CD8-positive, alpha-beta memory T cell (primary cell): ENCODE measurements at regions of chr11 and their contacts with region 1.

Region 1: GRCh38 chr11:64778508-64779346 is at the start of gene SF1:
- DNase-seq: peak; percentile 98 to 100 (median 100)
- H3K4me3 ChIP-seq: peak within 1 kb of the TSS; percentile 99
- H3K4me3 Mint-ChIP-seq: peak within 1 kb of the TSS; percentile 90 to 96 (median 95)
- H3K27ac ChIP-seq: peak within 1 kb of the TSS; percentile 98
- H3K27ac Mint-ChIP-seq: peak within 1 kb of the TSS; percentile 97 to 100 (median 99)
- H3K4me1 ChIP-seq: peaks cover 52% of the 10 kb centered on the region
- H3K4me1 Mint-ChIP-seq: peaks cover 58 to 64% (median 63%) of the 10 kb centered on the region in 3 donors
- H3K27me3 ChIP-seq: no peaks in the 10 kb centered on the region
- H3K27me3 Mint-ChIP-seq: peaks cover 0 to 7% of the 10 kb centered on the region in 2 donors
- total RNA-seq, gene SF1: 403 to 423 TPM

Region 2: GRCh38 chr11:64472593-64473455 is 305.9 kb before region 1 on chr11:
- CTCF ChIA-PET with region 1: no interaction called
- POLR2A ChIA-PET with region 1: no interaction called
- DNase-seq: no peak
- H3K4me3 ChIP-seq: no peak overlapping the region
- H3K4me3 Mint-ChIP-seq: no peak overlapping the region
- H3K27ac ChIP-seq: no peak overlapping the region
- H3K27ac Mint-ChIP-seq: peak overlapping the region in 1 of 8 donors; percentile 54
- H3K4me1 ChIP-seq: peaks cover 4% of the 10 kb centered on the region
- H3K4me1 Mint-ChIP-seq: peaks cover 0 to 5% (median 0%) of the 10 kb centered on the region in 3 donors
- H3K27me3 ChIP-seq: no peaks in the 10 kb centered on the region
- H3K27me3 Mint-ChIP-seq: peaks cover 24 to 50% of the 10 kb centered on the region in 2 donors

Region 3: GRCh38 chr11:64710418-64711137 is 68.1 kb before region 1 on chr11:
- CTCF ChIA-PET with region 1: no interaction called
- POLR2A ChIA-PET with region 1: no interaction called
- DNase-seq: no peak
- H3K4me3 ChIP-seq: no peak overlapping the region
- H3K4me3 Mint-ChIP-seq: peak overlapping the region in 3 of 7 donors; percentile 26 to 57 (median 49)
- H3K27ac ChIP-seq: no peak overlapping the region
- H3K27ac Mint-ChIP-seq: peak overlapping the region in 2 of 8 donors; percentile 26 to 65
- H3K4me1 ChIP-seq: peaks cover 8% of the 10 kb centered on the region
- H3K4me1 Mint-ChIP-seq: peaks cover 5 to 24% (median 17%) of the 10 kb centered on the region in 3 donors
- H3K27me3 ChIP-seq: peaks cover 40% of the 10 kb centered on the region
- H3K27me3 Mint-ChIP-seq: peaks cover 48 to 74% of the 10 kb centered on the region in 2 donors

Region 4: DNA sequence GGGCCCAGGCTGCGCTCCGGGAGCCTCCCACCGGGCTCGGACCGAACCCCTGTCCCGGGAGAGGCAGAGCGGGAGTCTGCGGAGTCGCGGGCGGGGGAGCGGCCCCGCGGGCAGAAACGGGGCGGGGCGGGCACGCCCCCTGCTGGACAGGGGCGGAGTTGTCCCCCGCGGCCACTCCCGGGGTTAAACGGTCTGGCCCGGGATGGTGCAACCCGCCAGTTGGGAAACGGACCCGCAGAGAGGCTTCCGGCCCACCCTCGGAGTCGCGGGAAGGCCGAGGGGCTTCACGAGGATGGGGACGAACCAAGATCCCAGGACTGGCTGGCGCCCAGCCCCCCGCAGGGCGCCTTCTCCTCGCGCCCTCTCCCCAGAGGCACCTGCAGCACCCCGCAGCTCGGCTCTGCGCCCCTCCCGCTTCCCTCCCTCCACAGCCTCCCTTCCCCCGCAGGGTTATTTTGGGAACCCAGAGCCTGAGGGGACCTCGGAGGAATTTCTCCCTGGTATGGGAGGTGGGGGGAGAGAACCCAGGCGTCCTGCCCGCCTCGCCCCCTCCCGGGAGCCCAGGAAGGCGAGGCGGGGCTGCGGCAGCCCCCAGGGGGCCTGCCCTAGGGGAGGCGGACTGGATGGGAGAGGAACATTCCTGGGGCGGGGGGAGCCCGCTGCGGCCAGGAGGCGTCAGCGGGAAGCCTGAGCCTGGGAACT is 35.7 kb before region 1 on chr11:
- CTCF ChIA-PET with region 1: interaction called, 441 read pairs
- POLR2A ChIA-PET with region 1: interaction called, 158 read pairs
- DNase-seq: peak; percentile 69 to 82 (median 72)
- H3K4me3 ChIP-seq: peak overlapping the region; percentile 87
- H3K4me3 Mint-ChIP-seq: peak overlapping the region; percentile 90 to 99 (median 97)
- H3K27ac ChIP-seq: peak overlapping the region; percentile 77
- H3K27ac Mint-ChIP-seq: peak overlapping the region in 1 of 8 donors; percentile 96
- H3K4me1 ChIP-seq: peaks cover 31% of the 10 kb centered on the region
- H3K4me1 Mint-ChIP-seq: peaks cover 31 to 64% (median 35%) of the 10 kb centered on the region in 3 donors
- H3K27me3 ChIP-seq: no peaks in the 10 kb centered on the region
- H3K27me3 Mint-ChIP-seq: peaks cover 0 to 7% of the 10 kb centered on the region in 2 donors

Region 5: DNA sequence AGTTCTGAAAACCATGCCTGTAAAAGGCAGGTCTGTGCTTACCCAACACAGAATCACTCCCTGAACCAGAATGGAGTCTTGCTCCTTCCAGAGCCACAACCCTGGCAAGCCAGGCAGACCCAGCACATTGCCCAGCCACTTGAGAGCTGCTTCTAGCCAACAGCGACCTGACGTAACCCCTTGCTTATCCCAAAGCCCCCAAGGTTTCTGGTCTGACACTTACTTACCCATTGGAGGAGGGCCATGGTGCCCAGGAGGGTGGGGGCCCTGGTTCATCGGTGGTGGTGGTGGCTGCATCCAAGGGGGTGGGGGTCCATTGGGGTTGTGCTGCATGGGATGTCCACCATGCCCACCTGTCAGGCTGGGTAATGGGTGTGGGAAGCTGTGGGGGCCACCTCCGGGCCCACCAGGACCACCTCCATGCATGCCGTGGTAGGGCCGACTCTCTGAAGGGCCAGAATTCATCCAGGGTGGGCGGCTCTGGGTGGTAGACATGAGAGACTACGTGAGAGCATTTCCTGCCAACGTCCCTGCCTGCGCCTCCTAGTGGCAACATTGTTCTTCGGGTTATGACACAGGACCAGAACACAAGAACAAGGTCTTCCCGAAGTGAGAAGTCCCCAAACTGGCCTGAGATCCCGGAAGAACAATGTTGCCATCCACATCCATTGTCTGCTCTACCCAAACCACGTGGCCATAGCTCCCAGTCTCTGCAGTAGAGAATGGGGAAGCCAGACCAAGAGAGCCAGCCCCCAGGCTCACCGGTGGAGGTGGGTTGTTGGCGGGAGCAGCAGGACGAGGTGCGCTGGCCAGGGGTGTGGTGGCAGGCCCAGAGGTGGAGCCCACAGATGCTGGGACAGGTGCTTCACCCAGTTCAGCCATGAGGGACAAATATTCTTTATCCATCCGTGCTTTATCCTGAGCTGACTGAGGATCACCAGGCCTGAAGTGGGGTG is 11.1 kb before region 1 on chr11:
- CTCF ChIA-PET with region 1: interaction called, 13 read pairs
- POLR2A ChIA-PET with region 1: interaction called, 45 read pairs
- DNase-seq: peak; percentile 72 to 88 (median 79)
- H3K4me3 ChIP-seq: no peak overlapping the region
- H3K4me3 Mint-ChIP-seq: peak overlapping the region; percentile 33 to 83 (median 64)
- H3K27ac ChIP-seq: peak overlapping the region; percentile 17
- H3K27ac Mint-ChIP-seq: peak overlapping the region; percentile 84 to 95 (median 89)
- H3K4me1 ChIP-seq: peaks cover 91% of the 10 kb centered on the region
- H3K4me1 Mint-ChIP-seq: peaks cover 80 to 94% (median 89%) of the 10 kb centered on the region in 3 donors
- H3K27me3 ChIP-seq: no peaks in the 10 kb centered on the region
- H3K27me3 Mint-ChIP-seq: peaks cover 0 to 6% of the 10 kb centered on the region in 2 donors

Region 6: DNA sequence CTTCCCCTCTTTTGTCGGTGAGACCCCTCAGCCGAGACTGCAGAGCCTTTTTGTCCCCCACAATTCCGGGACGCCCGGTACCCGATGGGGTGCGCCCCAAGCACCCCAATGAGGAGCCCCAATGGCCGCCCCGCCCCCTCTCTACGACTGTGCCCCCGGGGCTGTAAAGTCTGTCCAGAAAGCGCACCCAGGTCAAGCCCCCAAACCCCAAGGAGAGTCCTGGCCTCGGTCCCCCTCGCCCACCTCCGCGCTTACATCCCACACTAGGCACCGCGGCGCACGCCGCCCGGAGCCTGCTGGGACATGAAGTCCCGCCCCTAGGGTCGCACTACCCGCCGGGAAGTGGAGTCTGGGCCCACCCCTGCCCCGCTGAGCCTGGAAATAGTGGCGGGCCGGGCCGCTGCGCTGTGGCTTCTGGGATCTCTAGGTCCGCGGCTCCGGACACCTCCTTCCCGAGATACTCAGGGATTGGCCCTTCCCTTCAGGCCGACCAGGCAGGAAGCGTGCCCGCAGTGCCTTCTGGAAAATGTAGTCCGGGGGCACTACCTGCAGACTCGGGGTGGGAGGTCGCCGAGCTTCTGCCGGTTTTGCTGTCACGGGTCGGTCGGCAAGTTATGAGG is 31.7 kb after region 1 on chr11 and contains the start of gene MEN1:
- CTCF ChIA-PET with region 1: interaction called, 9 read pairs
- POLR2A ChIA-PET with region 1: interaction called, 43 read pairs
- DNase-seq: peak; percentile 55 to 84 (median 75)
- H3K4me3 ChIP-seq: peak within 1 kb of the TSS; percentile 83
- H3K4me3 Mint-ChIP-seq: peak within 1 kb of the TSS; percentile 85 to 96 (median 94)
- H3K27ac ChIP-seq: peak within 1 kb of the TSS; percentile 78
- H3K27ac Mint-ChIP-seq: peak within 1 kb of the TSS; percentile 89 to 97 (median 94)
- H3K4me1 ChIP-seq: peaks cover 15% of the 10 kb centered on the region
- H3K4me1 Mint-ChIP-seq: peaks cover 23 to 33% (median 30%) of the 10 kb centered on the region in 3 donors
- H3K27me3 ChIP-seq: no peaks in the 10 kb centered on the region
- H3K27me3 Mint-ChIP-seq: peaks cover 0 to 3% of the 10 kb centered on the region in 2 donors
- total RNA-seq, gene MEN1: 45.8 to 47.7 TPM

Region 7: GRCh38 chr11:64878494-64879243 is 99.9 kb after region 1 on chr11 and contains the start of gene EHD1:
- CTCF ChIA-PET with region 1: interaction called, 4 read pairs
- POLR2A ChIA-PET with region 1: interaction called, 10 read pairs
- DNase-seq: peak; percentile 99 to 100 (median 100)
- H3K4me3 ChIP-seq: peak within 1 kb of the TSS; percentile 99
- H3K4me3 Mint-ChIP-seq: peak within 1 kb of the TSS; percentile 98 to 100 (median 99)
- H3K27ac ChIP-seq: peak within 1 kb of the TSS; percentile 86
- H3K27ac Mint-ChIP-seq: peak within 1 kb of the TSS; percentile 91 to 99 (median 98)
- H3K4me1 ChIP-seq: peaks cover 58% of the 10 kb centered on the region
- H3K4me1 Mint-ChIP-seq: peaks cover 59 to 67% (median 62%) of the 10 kb centered on the region in 3 donors
- H3K27me3 ChIP-seq: no peaks in the 10 kb centered on the region
- H3K27me3 Mint-ChIP-seq: peaks cover 0 to 10% of the 10 kb centered on the region in 2 donors
- total RNA-seq, gene EHD1: 102 to 110 TPM